ENCODE measurements at regions of chr4 and their contacts with region 1.

Region 1: DNA sequence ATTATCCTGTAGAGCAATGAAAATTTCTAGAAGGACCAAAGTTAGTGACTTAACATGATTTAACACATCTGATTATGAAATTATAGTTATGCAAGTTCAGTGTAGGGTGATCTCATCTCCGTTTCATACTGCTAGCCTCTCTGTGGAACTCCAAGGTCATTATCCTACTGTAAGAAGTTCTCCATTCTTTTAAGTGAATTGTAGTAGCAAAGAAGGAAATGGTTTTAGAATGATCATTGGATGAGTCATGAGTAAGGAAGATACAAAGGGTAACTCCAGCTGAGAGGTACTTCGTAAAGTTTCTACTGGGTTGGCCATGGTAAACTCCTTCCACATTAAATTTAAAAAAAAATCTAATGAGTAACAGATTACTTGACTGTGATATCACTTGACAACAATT is 215.0 kb upstream of the GIMD1 start:
- DNase-seq: peak; percentile 91
- H3K4me3 ChIP-seq: no peak overlapping the region
- H3K27ac ChIP-seq: peak overlapping the region; percentile 96
- H3K4me1 ChIP-seq: peaks cover 56% of the 10 kb centered on the region
- H3K27me3 ChIP-seq: no peaks in the 10 kb centered on the region
- CTCF ChIP-seq: no peak
- POLR2A ChIP-seq: no peak

Region 2: DNA sequence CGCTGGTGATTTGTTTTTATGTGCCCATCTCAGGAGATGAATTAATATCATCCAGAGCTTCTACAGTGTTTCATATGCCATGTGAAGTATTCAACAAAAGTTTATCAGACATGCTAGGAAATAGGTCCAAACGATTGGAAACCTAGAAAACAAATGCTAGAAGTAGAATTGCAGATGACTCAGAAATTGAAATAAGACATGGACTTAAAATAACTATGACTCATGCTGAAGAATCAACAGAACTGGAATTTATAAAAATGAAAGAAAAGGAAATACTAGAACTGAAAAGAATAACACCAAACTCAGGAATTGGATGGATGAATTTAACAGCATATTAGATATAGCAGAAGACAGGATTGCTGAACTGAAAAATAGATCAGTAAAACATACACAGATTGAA is 42.3 kb before region 1 on chr4:
- CTCF ChIA-PET with region 1: no interaction called
- POLR2A ChIA-PET with region 1: no interaction called
- dilution Hi-C with region 1: no loop called
- intact Hi-C with region 1: loop called (anchors 1 kb)
- DNase-seq: peak; percentile 62
- H3K4me3 ChIP-seq: no peak overlapping the region
- H3K27ac ChIP-seq: peak overlapping the region; percentile 40
- H3K4me1 ChIP-seq: peaks cover 14% of the 10 kb centered on the region
- H3K27me3 ChIP-seq: no peaks in the 10 kb centered on the region
- CTCF ChIP-seq: no peak
- POLR2A ChIP-seq: no peak

Region 3: DNA sequence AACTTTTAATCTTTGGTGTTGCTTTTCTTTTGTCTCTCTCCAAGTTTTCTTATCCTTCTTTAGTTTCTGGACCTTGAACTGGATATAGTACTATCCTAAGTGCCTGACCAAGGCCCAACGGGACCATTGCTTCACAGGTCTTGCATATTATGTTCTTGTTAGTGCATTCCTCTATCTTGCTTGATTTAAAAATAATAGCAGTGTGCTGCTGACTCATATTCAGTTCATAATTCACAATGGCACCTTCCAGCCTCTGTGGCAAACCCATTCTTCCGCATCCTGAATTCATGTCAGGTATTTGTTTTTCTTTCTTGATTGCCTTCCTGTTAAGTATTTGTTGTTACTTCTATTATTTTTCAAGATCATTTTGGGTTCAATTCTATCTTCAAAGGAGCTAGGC is 17.8 kb before region 1 on chr4:
- CTCF ChIA-PET with region 1: interaction called, 3 read pairs
- POLR2A ChIA-PET with region 1: no interaction called
- dilution Hi-C with region 1: no loop called
- intact Hi-C with region 1: loop called (anchors 1 kb)
- DNase-seq: peak; percentile 84
- H3K4me3 ChIP-seq: peak overlapping the region in 1 of 3 experiments; percentile 38
- H3K27ac ChIP-seq: peak overlapping the region; percentile 80
- H3K4me1 ChIP-seq: peaks cover 28% of the 10 kb centered on the region
- H3K27me3 ChIP-seq: no peaks in the 10 kb centered on the region
- CTCF ChIP-seq: no peak
- POLR2A ChIP-seq: no peak

Region 4: DNA sequence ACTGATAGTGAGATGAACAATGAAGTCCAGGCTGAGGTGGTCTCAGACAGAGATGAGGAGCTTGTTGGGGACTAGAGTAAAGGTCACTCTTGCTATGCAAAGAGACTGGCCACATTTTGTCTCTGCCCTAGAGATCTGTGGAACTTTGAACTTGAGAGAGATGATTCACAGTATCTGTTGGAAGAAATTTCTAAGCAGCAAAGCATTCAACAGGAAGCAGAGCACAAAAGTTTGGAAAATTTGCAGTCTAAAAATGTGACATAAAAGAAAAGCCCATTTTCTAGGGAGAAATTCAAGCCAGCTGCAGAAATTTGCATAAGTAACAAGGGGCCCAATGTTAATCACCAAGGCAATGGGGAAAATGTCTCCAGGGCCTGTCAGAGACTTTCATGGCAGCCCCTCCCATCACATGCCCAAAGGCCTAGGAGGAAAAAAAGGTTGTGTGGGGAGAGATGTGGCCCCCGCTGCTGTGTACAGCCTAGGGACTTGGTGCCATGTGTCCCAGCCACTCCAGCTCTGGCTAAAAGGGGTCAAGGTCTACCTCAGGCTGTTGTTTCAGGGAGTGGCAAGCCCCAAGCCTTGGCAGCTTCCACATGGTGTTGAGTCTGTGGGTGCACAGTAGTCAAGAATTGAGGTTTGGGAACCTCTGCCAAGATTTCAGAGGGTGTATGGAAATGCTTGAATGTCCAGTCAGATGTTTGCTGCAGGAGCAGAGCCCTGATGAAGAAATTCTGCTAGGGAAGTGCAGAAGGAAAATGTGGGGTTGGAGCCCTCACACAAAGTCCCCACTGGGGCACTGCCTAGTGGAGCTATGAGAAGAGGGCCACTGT is 189.7 kb after region 1 on chr4:
- CTCF ChIA-PET with region 1: no interaction called
- POLR2A ChIA-PET with region 1: no interaction called
- dilution Hi-C with region 1: no loop called
- intact Hi-C with region 1: no loop called
- DNase-seq: no peak
- H3K4me3 ChIP-seq: no peak overlapping the region
- H3K27ac ChIP-seq: no peak overlapping the region
- H3K4me1 ChIP-seq: no peaks in the 10 kb centered on the region
- H3K27me3 ChIP-seq: no peaks in the 10 kb centered on the region
- CTCF ChIP-seq: no peak
- POLR2A ChIP-seq: no peak

Region 5: DNA sequence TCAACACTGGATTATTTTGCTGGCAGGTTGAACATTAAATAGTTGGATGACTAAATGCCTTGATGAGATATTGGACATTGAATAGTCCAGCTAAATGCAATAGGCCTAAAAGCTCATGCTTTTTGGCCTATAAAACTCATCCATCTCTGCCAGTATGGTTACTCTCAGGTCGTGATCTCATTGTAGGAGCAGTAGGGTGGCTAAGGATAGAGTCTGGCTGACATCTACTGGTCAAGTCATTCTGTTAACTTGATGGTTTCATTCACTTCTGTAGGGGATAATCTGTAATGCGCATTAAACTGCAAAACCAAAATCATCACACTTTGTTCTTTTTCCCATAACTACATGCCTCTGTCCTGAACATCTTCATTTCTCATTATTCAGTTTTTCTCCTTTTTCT is 225.5 kb after region 1 on chr4:
- CTCF ChIA-PET with region 1: interaction called, 7 read pairs
- POLR2A ChIA-PET with region 1: no interaction called
- dilution Hi-C with region 1: no loop called
- intact Hi-C with region 1: loop called (anchors 5 kb)
- DNase-seq: peak; percentile 66
- H3K4me3 ChIP-seq: no peak overlapping the region
- H3K27ac ChIP-seq: no peak overlapping the region
- H3K4me1 ChIP-seq: no peaks in the 10 kb centered on the region
- H3K27me3 ChIP-seq: no peaks in the 10 kb centered on the region
- CTCF ChIP-seq: peak; percentile 27 to 30
- POLR2A ChIP-seq: no peak